ENCODE measurements at regions of chr11 and their contacts with region 1.

Region 1: DNA sequence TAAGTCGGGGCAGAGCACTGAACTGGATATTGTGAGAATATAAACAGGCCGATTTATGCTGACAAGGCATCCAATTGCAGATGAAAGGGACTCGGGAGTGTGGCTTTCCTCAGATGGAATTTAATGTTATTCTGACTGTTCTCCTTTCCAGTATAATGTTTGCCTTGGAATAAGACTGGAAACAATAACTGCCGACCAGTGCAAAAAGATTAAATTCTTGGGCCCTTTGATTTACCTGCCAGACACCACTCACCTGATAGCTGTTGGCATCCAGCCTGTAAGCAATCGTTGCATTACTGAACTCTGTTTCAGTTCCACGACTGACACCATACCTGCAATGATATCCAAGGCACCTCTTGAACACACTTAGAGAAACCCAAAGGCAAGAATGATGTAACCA is 10.9 kb downstream of the NUP160 start:
- DNase-seq: no peak
- H3K4me3 ChIP-seq: no peak overlapping the region
- H3K27ac ChIP-seq: no peak overlapping the region
- H3K4me1 ChIP-seq: no peaks in the 10 kb centered on the region
- H3K27me3 ChIP-seq: no peaks in the 10 kb centered on the region
- CTCF ChIP-seq: no peak

Region 2: GRCh38 chr11:47001781-47002181 is 835.5 kb before region 1 on chr11:
- CTCF ChIA-PET with region 1: interaction called, 11 read pairs
- POLR2A ChIA-PET with region 1: no interaction called
- intact Hi-C with region 1: no loop called
- DNase-seq: no peak
- H3K4me3 ChIP-seq: no peak overlapping the region
- H3K27ac ChIP-seq: no peak overlapping the region
- H3K4me1 ChIP-seq: no peaks in the 10 kb centered on the region
- H3K27me3 ChIP-seq: no peaks in the 10 kb centered on the region
- CTCF ChIP-seq: no peak

Region 3: DNA sequence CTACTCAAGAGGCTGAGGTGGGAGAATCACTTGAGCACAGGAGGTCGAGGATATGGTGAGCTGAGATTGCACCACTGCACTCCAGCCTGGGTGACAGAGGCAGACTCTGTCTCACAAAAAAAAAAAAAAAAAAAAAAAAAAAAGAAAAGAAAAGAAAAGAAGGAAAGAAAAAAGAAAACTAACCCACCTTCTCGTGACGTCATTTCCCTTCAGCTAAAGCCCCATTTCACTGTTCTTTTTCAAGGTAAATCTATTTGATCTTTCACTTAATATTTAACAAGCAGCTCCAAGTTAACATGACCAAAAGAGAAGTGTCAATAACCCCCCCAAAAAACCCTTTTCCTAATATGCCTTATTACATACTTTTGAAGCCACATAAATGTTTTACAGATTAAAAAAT is 393.5 kb before region 1 on chr11:
- CTCF ChIA-PET with region 1: interaction called, 21 read pairs
- POLR2A ChIA-PET with region 1: no interaction called
- intact Hi-C with region 1: no loop called
- DNase-seq: no peak
- H3K4me3 ChIP-seq: no peak overlapping the region
- H3K27ac ChIP-seq: no peak overlapping the region
- H3K4me1 ChIP-seq: no peaks in the 10 kb centered on the region
- H3K27me3 ChIP-seq: no peaks in the 10 kb centered on the region
- CTCF ChIP-seq: no peak